ENCODE measurements at regions of chr6 and their contacts with region 1.

Region 1: DNA sequence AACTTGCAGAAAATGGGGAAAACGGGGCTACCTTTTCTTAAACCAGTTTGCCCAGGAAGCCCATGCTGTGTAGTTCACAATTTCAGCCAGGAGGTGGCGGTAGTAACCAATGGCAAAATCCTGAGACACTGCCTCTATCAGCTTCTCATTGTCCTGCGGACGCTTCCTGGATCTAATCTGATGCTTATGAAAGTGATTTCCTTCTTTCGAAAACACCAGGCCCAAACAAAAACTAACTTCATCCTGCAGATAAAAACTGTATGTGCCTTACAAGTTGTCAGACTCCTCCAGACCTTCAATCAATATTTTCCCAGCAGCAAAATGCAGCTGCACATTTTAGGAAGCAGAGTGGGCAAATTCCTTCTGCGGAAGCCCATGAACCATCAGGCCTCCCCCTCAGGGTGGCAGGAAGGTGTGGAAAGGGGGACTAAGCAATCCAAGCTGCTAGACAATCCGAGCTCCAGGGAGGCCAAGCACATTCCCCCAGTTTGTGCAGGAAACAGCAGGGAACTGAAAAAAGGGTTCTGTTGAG is 88.5 kb downstream of the LY86 start:
- DNase-seq: peak; percentile 64 to 95
- H3K4me3 ChIP-seq: no peak overlapping the region
- H3K27ac ChIP-seq: no peak overlapping the region
- H3K4me1 ChIP-seq: peaks cover 5 to 15% (median 11%) of the 10 kb centered on the region in 4 experiments
- H3K27me3 ChIP-seq: no peaks in the 10 kb centered on the region; a peak in 1 of 7 replicates
- CTCF ChIP-seq: peak; percentile 59 to 88 (median 86)
- EP300 ChIP-seq: no peak
- POLR2A ChIP-seq: no peak
- RAD21 ChIP-seq: peak; percentile 95

Region 2: GRCh38 chr6:6661684-6662083 is 15.3 kb before region 1 on chr6:
- CTCF ChIA-PET with region 1: interaction called, 19 read pairs
- POLR2A ChIA-PET with region 1: no interaction called
- DNase-seq: no peak
- H3K4me3 ChIP-seq: no peak overlapping the region
- H3K27ac ChIP-seq: no peak overlapping the region
- H3K4me1 ChIP-seq: no peaks in the 10 kb centered on the region
- H3K27me3 ChIP-seq: no peaks in the 10 kb centered on the region; a peak in 1 of 7 replicates
- CTCF ChIP-seq: no peak
- EP300 ChIP-seq: no peak
- POLR2A ChIP-seq: no peak
- RAD21 ChIP-seq: no peak

Region 3: GRCh38 chr6:6712258-6712999 is 35.5 kb after region 1 on chr6:
- CTCF ChIA-PET with region 1: interaction called, 23 read pairs
- POLR2A ChIA-PET with region 1: no interaction called
- DNase-seq: no peak
- H3K4me3 ChIP-seq: no peak overlapping the region
- H3K27ac ChIP-seq: no peak overlapping the region
- H3K4me1 ChIP-seq: peaks cover 3 to 20% (median 8%) of the 10 kb centered on the region in 4 experiments; a peak in 6 of 7 replicates
- H3K27me3 ChIP-seq: no peaks in the 10 kb centered on the region
- CTCF ChIP-seq: no peak
- EP300 ChIP-seq: no peak
- POLR2A ChIP-seq: no peak
- RAD21 ChIP-seq: no peak; a peak in 1 of 4 replicates

Region 4: GRCh38 chr6:6736791-6737654 is 60.0 kb after region 1 on chr6:
- CTCF ChIA-PET with region 1: interaction called, 15 read pairs
- POLR2A ChIA-PET with region 1: no interaction called
- DNase-seq: peak in 1 of 2 experiments; percentile 82
- H3K4me3 ChIP-seq: no peak overlapping the region
- H3K27ac ChIP-seq: no peak overlapping the region
- H3K4me1 ChIP-seq: peaks cover 1 to 10% (median 5%) of the 10 kb centered on the region in 4 experiments; a peak in 4 of 7 replicates
- H3K27me3 ChIP-seq: no peaks in the 10 kb centered on the region; a peak in 2 of 7 replicates
- CTCF ChIP-seq: no peak
- EP300 ChIP-seq: no peak
- POLR2A ChIP-seq: no peak
- RAD21 ChIP-seq: 0 out of 4 replicates have a peak, but pooled peaks of 1 of the 2 experiments have one; percentile 4

Region 5: GRCh38 chr6:6915813-6916547 is 239.0 kb after region 1 on chr6:
- CTCF ChIA-PET with region 1: interaction called, 20 read pairs
- POLR2A ChIA-PET with region 1: no interaction called
- DNase-seq: no peak
- H3K4me3 ChIP-seq: no peak overlapping the region
- H3K27ac ChIP-seq: no peak overlapping the region
- H3K4me1 ChIP-seq: no peaks in the 10 kb centered on the region; a peak in 1 of 7 replicates
- H3K27me3 ChIP-seq: no peaks in the 10 kb centered on the region; a peak in 1 of 7 replicates
- CTCF ChIP-seq: no peak
- EP300 ChIP-seq: no peak
- POLR2A ChIP-seq: no peak
- RAD21 ChIP-seq: no peak